ENCODE measurements at regions of chr14 and their contacts with region 1.

Region 1: GRCh38 chr14:73173092-73173735 is 36.9 kb downstream of the PSEN1 start:
- DNase-seq: peak; percentile 23
- H3K4me3 ChIP-seq: no peak overlapping the region
- CTCF ChIP-seq: peak; percentile 37

Region 2: GRCh38 chr14:73269729-73270531 is 96.7 kb after region 1 on chr14:
- CTCF ChIA-PET with region 1: interaction called, 22 read pairs
- POLR2A ChIA-PET with region 1: no interaction called
- DNase-seq: no peak
- H3K4me3 ChIP-seq: peak overlapping the region; percentile 38
- CTCF ChIP-seq: no peak

Region 3: DNA sequence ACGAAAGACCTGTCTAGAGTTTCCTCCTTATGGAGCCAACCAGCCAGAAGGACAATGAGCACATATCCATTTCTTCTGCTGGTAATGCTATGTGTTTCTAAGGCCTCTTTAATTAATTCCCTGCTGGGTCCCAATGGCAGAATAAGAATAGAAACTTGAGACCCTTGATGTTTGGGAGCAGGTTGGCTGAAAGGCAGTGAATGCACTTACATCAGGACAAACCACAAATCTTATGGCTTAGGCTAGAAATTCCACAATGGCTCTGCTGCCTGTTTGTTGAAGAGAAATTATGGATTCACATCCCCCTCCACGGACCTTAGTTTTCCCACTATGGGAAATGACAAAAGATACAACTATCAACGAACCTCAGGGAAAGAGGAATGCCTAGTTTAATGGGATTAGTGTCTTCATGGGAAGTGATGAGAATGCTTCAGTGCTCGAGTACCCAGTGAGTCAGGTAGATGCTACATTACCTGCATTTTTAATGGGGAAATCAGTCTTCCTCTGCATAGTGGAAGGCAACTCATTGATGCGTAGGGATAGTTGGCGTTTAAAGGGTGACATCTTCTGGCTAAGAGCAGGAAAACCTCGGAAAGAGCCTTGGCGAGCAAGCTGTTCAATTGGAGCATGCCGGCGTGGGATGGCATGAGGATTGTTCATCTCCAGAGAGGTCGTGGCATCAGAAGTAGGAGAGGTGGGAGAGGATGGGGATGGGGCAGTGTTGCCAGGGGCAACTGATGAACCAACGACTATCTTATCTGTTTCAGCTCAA is 110.6 kb after region 1 on chr14:
- CTCF ChIA-PET with region 1: interaction called, 42 read pairs
- POLR2A ChIA-PET with region 1: no interaction called
- DNase-seq: no peak
- H3K4me3 ChIP-seq: no peak overlapping the region
- CTCF ChIP-seq: peak; percentile 42

Region 4: DNA sequence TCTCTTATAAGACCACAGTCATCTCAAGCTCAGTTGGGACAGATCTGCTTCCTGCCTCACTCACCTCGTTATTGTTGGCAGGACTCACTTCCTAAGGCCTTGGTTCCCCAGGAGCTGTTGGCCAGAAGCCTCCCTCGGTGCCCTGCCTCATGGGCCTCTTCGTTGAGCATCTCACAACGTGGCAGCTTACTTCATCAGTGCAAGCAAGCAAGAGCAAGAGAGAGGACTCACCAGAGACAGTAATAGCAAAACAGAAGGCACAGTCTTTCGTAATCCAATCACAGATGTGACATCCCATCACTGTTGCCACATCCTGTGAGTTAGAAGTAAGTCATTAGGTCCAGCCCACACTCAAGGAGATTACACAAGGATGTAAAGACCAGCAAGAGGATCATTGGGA is 290.2 kb after region 1 on chr14:
- CTCF ChIA-PET with region 1: interaction called, 133 read pairs
- POLR2A ChIA-PET with region 1: no interaction called
- DNase-seq: peak; percentile 93
- H3K4me3 ChIP-seq: no peak overlapping the region
- CTCF ChIP-seq: no peak

Measured in AG04449 (cell line).